ENCODE measurements at regions of chr13 and their contacts with region 1.

Region 1: GRCh38 chr13:74133657-74134201 is 475 bp downstream of the KLF12 start:
- DNase-seq: peak; percentile 69 to 97 (median 93)
- ATAC-seq: peak; percentile 72
- H3K4me3 ChIP-seq: peak overlapping the region; percentile 86
- H3K4me3 Mint-ChIP-seq: peak overlapping the region in 8 of 10 donors; percentile 92 to 100 (median 97)
- H3K27ac ChIP-seq: peak overlapping the region; percentile 98
- H3K27ac Mint-ChIP-seq: peak overlapping the region; percentile 97 to 100 (median 99)
- H3K4me1 ChIP-seq: peaks cover 24 to 39% of the 10 kb centered on the region in 2 donors
- H3K4me1 Mint-ChIP-seq: peaks cover 14 to 38% (median 37%) of the 10 kb centered on the region in 7 donors
- H3K27me3 ChIP-seq: no peaks in the 10 kb centered on the region
- H3K27me3 Mint-ChIP-seq: peaks cover 0 to 5% (median 0%) of the 10 kb centered on the region in 5 donors

Region 2: GRCh38 chr13:73715114-73715910 is 418.4 kb before region 1 on chr13:
- CTCF ChIA-PET with region 1: no interaction called
- POLR2A ChIA-PET with region 1: interaction called, 4 read pairs
- intact Hi-C with region 1: loop called (anchors 1 to 2 kb)
- DNase-seq: peak in 8 of 9 donors; percentile 53 to 85 (median 77)
- ATAC-seq: peak; percentile 90
- H3K4me3 ChIP-seq: peak overlapping the region; percentile 7
- H3K4me3 Mint-ChIP-seq: peak overlapping the region; percentile 72 to 86 (median 78)
- H3K27ac ChIP-seq: peak overlapping the region; percentile 67
- H3K27ac Mint-ChIP-seq: peak overlapping the region; percentile 87 to 99 (median 97)
- H3K4me1 ChIP-seq: peaks cover 34 to 43% of the 10 kb centered on the region in 2 donors
- H3K4me1 Mint-ChIP-seq: peaks cover 25 to 80% (median 58%) of the 10 kb centered on the region in 7 donors
- H3K27me3 ChIP-seq: no peaks in the 10 kb centered on the region
- H3K27me3 Mint-ChIP-seq: no peaks in the 10 kb centered on the region

Region 3: GRCh38 chr13:73938375-73939070 is 195.2 kb before region 1 on chr13:
- CTCF ChIA-PET with region 1: interaction called, 3 read pairs
- POLR2A ChIA-PET with region 1: interaction called, 3 read pairs
- intact Hi-C with region 1: loop called (anchors 1 to 2 kb)
- DNase-seq: no peak
- ATAC-seq: no peak
- H3K4me3 ChIP-seq: no peak overlapping the region
- H3K4me3 Mint-ChIP-seq: no peak overlapping the region
- H3K27ac ChIP-seq: no peak overlapping the region
- H3K27ac Mint-ChIP-seq: peak overlapping the region in 3 of 9 donors; percentile 29 to 57 (median 33)
- H3K4me1 ChIP-seq: peaks cover 22 to 38% of the 10 kb centered on the region in 2 donors
- H3K4me1 Mint-ChIP-seq: peaks cover 40 to 94% (median 83%) of the 10 kb centered on the region in 7 donors
- H3K27me3 ChIP-seq: no peaks in the 10 kb centered on the region
- H3K27me3 Mint-ChIP-seq: no peaks in the 10 kb centered on the region

Region 4: GRCh38 chr13:74062933-74063332 is 70.8 kb before region 1 on chr13:
- CTCF ChIA-PET with region 1: interaction called, 3 read pairs
- POLR2A ChIA-PET with region 1: interaction called, 28 read pairs
- intact Hi-C with region 1: loop called (anchors 1 to 2 kb)
- DNase-seq: peak in 1 of 9 donors; percentile 24
- ATAC-seq: peak; percentile 5
- H3K4me3 ChIP-seq: no peak overlapping the region
- H3K4me3 Mint-ChIP-seq: peak overlapping the region; percentile 26 to 80 (median 64)
- H3K27ac ChIP-seq: no peak overlapping the region
- H3K27ac Mint-ChIP-seq: peak overlapping the region; percentile 58 to 86 (median 81)
- H3K4me1 ChIP-seq: peaks cover 52 to 73% of the 10 kb centered on the region in 2 donors
- H3K4me1 Mint-ChIP-seq: peaks cover 50 to 95% (median 91%) of the 10 kb centered on the region in 7 donors
- H3K27me3 ChIP-seq: no peaks in the 10 kb centered on the region
- H3K27me3 Mint-ChIP-seq: no peaks in the 10 kb centered on the region

Region 5: DNA sequence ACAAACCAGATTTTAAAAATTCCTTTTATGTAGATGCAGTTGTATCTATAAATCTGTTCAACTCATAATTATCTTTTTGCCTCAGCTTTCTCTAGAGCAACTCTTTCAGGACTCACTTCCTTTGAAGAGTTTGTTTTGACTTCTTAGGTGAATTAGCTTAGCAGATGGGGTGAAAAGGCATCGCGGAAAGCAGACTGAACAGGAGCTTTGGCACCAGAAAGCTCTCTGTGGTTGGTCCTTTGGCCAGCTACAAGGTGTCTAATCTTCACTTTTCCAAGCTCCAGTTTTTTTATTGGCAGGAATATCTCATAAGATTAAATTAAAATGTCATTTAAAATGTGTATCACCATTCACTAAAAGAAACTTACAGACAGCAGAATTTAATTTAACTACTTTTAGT is 61.1 kb after region 1 on chr13:
- CTCF ChIA-PET with region 1: no interaction called
- POLR2A ChIA-PET with region 1: interaction called, 4 read pairs
- intact Hi-C with region 1: loop called in 1 of 2 experiments (anchors 2 kb)
- DNase-seq: peak in 5 of 9 donors; percentile 3 to 22 (median 16)
- ATAC-seq: no peak
- H3K4me3 ChIP-seq: no peak overlapping the region
- H3K4me3 Mint-ChIP-seq: peak overlapping the region in 4 of 10 donors; percentile 23 to 57 (median 40)
- H3K27ac ChIP-seq: no peak overlapping the region
- H3K27ac Mint-ChIP-seq: peak overlapping the region in 5 of 9 donors; percentile 21 to 89 (median 50)
- H3K4me1 ChIP-seq: peaks cover 6 to 26% of the 10 kb centered on the region in 2 donors
- H3K4me1 Mint-ChIP-seq: peaks cover 15 to 43% (median 41%) of the 10 kb centered on the region in 7 donors
- H3K27me3 ChIP-seq: no peaks in the 10 kb centered on the region
- H3K27me3 Mint-ChIP-seq: peaks cover 0 to under 1% (median 0%) of the 10 kb centered on the region in 5 donors

Region 6: DNA sequence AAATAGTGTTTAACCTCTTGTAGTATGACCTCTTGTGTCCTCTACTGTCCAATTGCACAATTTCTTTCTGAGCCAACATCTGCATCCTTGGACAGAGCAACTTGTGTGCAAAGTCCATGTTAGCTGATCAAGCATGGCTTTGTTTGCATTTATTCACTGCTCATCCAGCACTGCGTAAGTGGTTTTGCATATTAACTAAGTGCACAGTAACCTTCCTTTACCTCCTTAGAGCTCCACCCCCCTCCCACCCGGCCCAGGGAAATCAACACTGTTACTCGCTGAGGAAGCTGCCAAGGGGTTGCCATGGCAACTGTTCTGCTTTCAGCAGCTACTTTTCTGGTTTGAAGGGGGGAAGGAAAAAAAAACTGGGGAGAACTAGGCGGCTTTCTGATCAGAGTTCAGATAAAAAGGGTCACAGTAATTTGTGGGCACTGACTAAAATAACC is 154.0 kb after region 1 on chr13:
- CTCF ChIA-PET with region 1: interaction called, 73 read pairs
- POLR2A ChIA-PET with region 1: interaction called, 122 read pairs
- intact Hi-C with region 1: loop called (anchors 1 kb)
- DNase-seq: peak; percentile 40 to 98 (median 90)
- ATAC-seq: peak; percentile 74
- H3K4me3 ChIP-seq: peak overlapping the region; percentile 51
- H3K4me3 Mint-ChIP-seq: peak overlapping the region; percentile 68 to 91 (median 82)
- H3K27ac ChIP-seq: peak overlapping the region; percentile 82
- H3K27ac Mint-ChIP-seq: peak overlapping the region; percentile 79 to 96 (median 94)
- H3K4me1 ChIP-seq: peaks cover 26 to 48% of the 10 kb centered on the region in 2 donors
- H3K4me1 Mint-ChIP-seq: peaks cover 41 to 77% (median 71%) of the 10 kb centered on the region in 7 donors
- H3K27me3 ChIP-seq: no peaks in the 10 kb centered on the region
- H3K27me3 Mint-ChIP-seq: peaks cover 0 to 2% (median 0%) of the 10 kb centered on the region in 5 donors

Measured in naive thymus-derived CD4-positive, alpha-beta T cell (primary cell).